ENCODE measurements at regions of chr15 and their contacts with region 1.

Region 1: DNA sequence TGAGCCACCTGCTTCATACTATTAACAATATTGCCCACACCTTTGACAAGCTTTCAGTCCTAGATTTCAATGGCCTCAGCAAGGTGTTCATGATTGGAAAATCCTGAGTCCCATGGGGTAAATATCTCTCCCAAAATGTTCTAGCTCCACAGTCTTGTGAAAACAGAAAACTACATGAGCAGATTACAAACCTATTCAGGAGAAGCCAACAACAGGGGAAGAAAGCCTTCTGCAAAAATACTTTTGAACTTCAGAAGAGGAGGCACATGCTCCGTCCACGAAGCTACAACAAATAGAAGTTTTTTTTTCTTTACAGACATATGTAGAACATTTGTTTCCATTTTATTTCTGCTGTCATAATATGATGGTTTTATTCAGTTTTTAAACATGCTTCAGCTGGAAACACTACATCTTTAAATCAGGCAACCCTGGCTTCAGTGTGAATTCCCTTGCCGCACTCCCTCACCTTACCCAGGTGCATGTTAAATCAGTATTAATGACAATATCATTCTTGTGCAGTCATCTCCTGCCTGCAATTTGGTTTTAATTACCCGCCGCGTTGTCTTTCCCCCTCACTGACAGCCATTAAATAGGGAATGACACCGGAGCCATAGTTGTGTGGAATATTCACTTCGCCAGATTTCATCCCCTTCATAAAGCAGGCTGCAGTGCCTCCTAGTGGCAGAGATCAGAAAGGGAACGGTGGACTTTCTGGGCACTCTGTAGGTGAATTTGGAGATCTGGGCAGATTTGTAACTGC is 725.5 kb upstream of the ARRDC4 start:
- DNase-seq: peak; percentile 71
- H3K4me3 ChIP-seq: no peak overlapping the region
- H3K27ac ChIP-seq: no peak overlapping the region
- H3K4me1 ChIP-seq: no peaks in the 10 kb centered on the region
- H3K27me3 ChIP-seq: peaks cover 0 to 2% of the 10 kb centered on the region in 2 experiments
- CTCF ChIP-seq: peak; percentile 75 to 90
- POLR2A ChIP-seq: no peak

Region 2: DNA sequence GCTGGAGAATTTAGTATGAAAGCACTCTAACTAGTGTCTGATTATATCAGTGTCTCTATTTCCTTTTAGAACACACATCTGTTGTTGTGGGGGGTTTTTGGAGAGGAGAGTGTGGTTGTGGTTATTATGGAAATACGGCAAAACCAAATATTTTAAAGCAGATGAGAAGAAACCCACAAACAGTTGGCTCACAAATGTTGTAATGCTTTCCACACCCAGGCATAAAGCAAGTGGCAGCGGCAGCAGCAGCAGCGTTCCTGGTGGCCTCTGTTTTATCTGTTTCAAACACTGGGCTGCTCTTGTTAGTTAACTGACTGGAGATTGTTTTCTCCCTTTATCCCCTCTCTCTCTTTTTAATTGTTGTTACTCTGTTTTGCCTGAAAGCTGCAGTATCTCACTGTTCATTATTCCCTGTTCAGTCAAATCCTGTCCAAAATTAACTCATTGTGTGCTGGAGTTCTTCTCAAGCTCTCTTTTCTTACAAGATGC is 1950.1 kb before region 1 on chr15:
- CTCF ChIA-PET with region 1: no interaction called
- POLR2A ChIA-PET with region 1: no interaction called
- dilution Hi-C with region 1: no loop called
- intact Hi-C with region 1: loop called (anchors 2 kb)
- DNase-seq: peak; percentile 88
- H3K4me3 ChIP-seq: no peak overlapping the region
- H3K27ac ChIP-seq: peak overlapping the region; percentile 15
- H3K4me1 ChIP-seq: peaks cover 63% of the 10 kb centered on the region
- H3K27me3 ChIP-seq: no peaks in the 10 kb centered on the region
- CTCF ChIP-seq: peak; percentile 21 to 28
- POLR2A ChIP-seq: no peak

Region 3: DNA sequence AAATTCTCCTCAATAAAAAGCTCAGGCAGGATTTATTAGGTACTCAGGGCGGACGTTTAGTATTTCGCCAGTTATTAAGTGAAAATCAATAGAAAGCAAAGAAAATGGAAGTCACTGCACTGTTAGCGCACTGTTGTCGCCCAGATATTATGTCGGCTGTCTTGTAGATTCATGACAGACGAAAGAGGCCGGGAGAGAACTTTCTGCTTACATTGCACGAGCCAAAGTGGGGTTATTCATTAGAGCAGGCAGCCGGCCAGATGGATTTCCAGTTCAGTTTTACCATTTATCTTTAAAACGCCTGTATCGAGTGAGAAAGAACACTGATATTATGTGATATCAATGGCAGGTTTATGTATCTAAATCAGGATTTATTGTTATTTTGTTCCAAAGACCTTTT is 1770.5 kb before region 1 on chr15:
- CTCF ChIA-PET with region 1: no interaction called
- POLR2A ChIA-PET with region 1: no interaction called
- dilution Hi-C with region 1: no loop called
- intact Hi-C with region 1: loop called (anchors 10 kb)
- DNase-seq: peak; percentile 79
- H3K4me3 ChIP-seq: peak overlapping the region in 1 of 3 experiments; percentile 52
- H3K27ac ChIP-seq: peak overlapping the region; percentile 60
- H3K4me1 ChIP-seq: peaks cover 36% of the 10 kb centered on the region
- H3K27me3 ChIP-seq: no peaks in the 10 kb centered on the region
- CTCF ChIP-seq: no peak
- POLR2A ChIP-seq: no peak

Region 4: DNA sequence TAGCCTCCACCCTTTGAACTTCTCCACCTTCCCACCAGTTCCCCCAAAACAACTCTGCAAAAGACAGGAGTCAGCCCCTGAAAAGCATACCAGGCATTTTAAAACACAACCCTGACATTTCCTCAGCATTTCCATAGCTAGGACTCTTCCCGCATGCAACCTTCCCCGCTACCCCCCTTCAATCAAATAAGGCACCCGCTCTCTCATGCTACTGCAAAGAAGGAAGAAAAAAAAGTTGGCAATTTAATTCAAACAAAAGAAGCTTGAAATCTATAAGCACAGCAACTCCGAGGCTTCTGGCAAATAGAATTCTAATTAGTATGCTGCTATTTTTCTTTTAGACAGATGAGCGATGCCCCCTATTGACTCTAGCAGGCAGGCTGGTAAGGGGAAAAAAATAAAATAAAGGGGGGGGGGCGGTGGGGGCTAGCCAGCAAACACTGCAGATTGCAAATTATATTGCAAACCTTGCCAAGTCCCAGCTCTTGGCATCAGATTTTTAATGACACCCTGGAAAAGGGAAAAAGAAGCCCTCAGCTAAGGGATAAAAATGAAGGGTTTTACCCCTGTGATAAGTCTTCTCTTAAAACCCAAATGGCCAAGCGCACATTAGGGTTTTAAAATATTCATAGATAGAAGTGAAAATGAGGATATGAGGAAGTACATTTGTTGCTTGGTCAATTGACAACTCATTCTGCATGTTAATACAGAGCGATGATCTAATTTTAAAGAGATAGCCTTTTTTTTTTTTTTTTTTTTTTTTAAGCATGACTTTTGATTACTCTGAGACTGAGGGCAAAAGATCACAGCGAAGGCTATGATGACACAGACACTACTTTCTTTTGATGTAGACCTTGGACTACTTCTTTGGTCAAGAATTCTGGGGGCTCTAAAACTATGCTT is 649.3 kb before region 1 on chr15:
- CTCF ChIA-PET with region 1: interaction called, 6 read pairs
- POLR2A ChIA-PET with region 1: no interaction called
- dilution Hi-C with region 1: no loop called
- intact Hi-C with region 1: loop called (anchors 2 kb)
- DNase-seq: peak; percentile 39
- H3K4me3 ChIP-seq: no peak overlapping the region
- H3K27ac ChIP-seq: no peak overlapping the region
- H3K4me1 ChIP-seq: no peaks in the 10 kb centered on the region
- H3K27me3 ChIP-seq: peaks cover 0 to 2% of the 10 kb centered on the region in 2 experiments
- CTCF ChIP-seq: peak in 1 of 2 donors; percentile 33
- POLR2A ChIP-seq: no peak

Measured in endothelial cell of umbilical vein (primary cell).